Mammary epithelial cell (primary cell): ENCODE measurements at regions of chrX and their contacts with region 1.

Region 1: GRCh38 chrX:47129157-47129898 is 15.2 kb downstream of the NDUFB11 start:
- DNase-seq: peak; percentile 93
- H3K4me3 ChIP-seq: peak overlapping the region; percentile 40 to 57 (median 55)
- H3K27ac ChIP-seq: no peak overlapping the region
- H3K4me1 ChIP-seq: no peaks in the 10 kb centered on the region
- H3K27me3 ChIP-seq: no peaks in the 10 kb centered on the region
- CTCF ChIP-seq: no peak

Region 2: GRCh38 chrX:47144626-47145394 is 15.5 kb after region 1 on chrX and contains the starts of genes NDUFB11 and RBM10:
- CTCF ChIA-PET with region 1: no interaction called
- dilution Hi-C with region 1: no loop called
- in situ Hi-C with region 1: no loop called
- intact Hi-C with region 1: loop called (anchors 2 kb)
- DNase-seq: peak; percentile 91
- H3K4me3 ChIP-seq: peak within 1 kb of the TSS; percentile 64 to 79 (median 65)
- H3K27ac ChIP-seq: peak within 1 kb of the TSS; percentile 78
- H3K4me1 ChIP-seq: peaks cover 9% of the 10 kb centered on the region
- H3K27me3 ChIP-seq: no peaks in the 10 kb centered on the region
- CTCF ChIP-seq: peak; percentile 37 to 61
- total RNA-seq, gene NDUFB11: 42.3 to 57.2 TPM
- total RNA-seq, gene RBM10: 33.3 to 42.1 TPM